ENCODE measurements at regions of chr1 and their contacts with region 1.

Region 1: DNA sequence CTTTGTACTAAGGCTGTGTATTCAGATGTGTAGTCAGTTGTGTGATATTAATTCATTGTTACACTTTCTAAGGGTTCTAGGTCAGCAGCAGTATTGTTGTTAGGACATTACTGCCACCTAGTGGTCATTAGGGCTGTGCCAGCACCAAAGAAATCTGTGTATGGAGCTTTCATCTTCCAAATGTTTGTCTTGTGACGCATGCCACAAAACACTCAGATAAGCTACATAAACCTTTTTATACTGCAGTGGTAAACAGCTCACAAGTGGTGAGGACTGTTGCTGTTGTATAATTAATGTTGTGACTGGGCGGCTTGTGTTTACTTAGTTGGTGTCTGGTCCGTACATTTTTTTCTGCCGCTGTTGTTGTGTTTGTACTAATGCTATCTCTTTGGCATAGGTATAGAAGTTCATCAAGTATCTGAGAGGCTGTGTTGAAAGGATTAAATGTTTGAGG is 51.7 kb downstream of the S1PR1 start:
- DNase-seq: peak; percentile 31 to 58
- H3K4me3 ChIP-seq: no peak overlapping the region
- H3K27ac ChIP-seq: no peak overlapping the region
- H3K4me1 ChIP-seq: no peaks in the 10 kb centered on the region
- H3K27me3 ChIP-seq: no peaks in the 10 kb centered on the region
- CTCF ChIP-seq: peak; percentile 73 to 84 (median 76)
- POLR2A ChIP-seq: no peak

Region 2: DNA sequence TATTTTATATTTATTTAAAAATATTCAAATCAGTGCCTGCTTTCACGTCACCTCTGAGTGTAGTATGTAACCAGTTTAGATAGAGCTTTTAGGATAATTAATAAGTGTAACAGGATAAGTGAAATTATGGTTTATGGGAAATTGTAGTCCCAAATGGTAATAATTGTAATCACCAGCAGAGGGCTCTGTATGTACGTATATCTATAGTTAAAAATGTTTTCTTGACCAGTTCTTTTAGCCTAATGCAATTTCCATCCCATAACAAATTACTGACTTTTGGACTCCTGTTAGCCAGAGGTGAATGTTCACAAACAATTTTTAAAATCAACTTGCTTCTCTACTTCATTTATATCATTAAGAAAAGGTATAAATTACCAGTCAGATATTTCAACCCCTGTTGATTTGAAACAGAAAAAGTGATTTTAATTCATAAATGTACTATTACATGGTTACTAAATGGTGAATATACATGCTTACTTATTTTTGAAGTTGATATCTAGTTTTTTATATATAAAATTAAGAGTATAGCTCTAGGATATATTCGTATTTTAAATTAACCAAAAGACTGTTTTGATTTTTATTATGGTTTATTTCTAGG is 367.3 kb before region 1 on chr1:
- intact Hi-C with region 1: loop called (anchors 5 kb)
- DNase-seq: no peak
- H3K4me3 ChIP-seq: no peak overlapping the region
- H3K27ac ChIP-seq: no peak overlapping the region
- H3K4me1 ChIP-seq: no peaks in the 10 kb centered on the region
- H3K27me3 ChIP-seq: no peaks in the 10 kb centered on the region
- CTCF ChIP-seq: peak in 2 of 3 donors; percentile 68 to 71
- POLR2A ChIP-seq: no peak

Measured in breast epithelium (tissue), 4 donors.